ENCODE measurements at regions of chr2 and their contacts with region 1.

Region 1: DNA sequence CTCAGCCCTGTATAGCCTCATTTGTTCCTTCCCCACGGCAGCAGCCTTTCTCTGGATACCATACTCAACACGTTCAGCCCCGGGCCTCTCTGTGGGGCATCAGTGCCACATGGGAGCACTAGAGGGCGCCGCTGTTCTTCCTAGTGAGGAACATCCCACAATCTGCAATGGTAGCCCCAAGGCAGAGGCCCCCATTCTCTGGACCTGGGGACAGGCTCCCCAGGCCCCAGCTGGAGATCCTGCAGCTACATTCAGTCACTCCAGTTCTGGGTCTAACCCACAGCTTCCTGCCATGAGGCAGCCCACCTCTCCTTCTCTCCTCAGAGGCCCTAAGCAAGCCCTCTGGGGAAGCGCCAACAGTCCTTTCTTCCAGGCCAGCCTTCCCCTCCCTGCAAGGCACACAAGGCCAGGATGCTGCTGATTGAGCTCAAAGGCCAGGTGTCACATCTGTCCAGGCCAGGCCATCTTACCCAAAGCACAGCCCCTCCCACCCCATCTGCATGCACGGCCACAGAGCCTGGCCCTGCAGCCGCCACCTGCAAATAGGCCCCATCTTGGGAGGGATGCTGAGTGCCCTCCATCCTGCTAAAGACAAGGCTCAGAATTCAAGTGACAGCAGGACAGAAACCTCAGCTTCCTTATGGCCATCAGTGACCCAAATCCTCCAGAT is 14.3 kb upstream of the SFXN5 start:
- DNase-seq: peak; percentile 33
- H3K4me3 ChIP-seq: 0 out of 2 replicates have a peak overlapping the region, but pooled peaks have one; percentile 15
- H3K27ac ChIP-seq: no peak overlapping the region
- H3K27me3 ChIP-seq: no peaks in the 10 kb centered on the region
- CTCF ChIP-seq: peak; percentile 98

Region 2: GRCh38 chr2:72915907-72916742 is 169.7 kb before region 1 on chr2:
- CTCF ChIA-PET with region 1: no interaction called
- POLR2A ChIA-PET with region 1: no interaction called
- DNase-seq: no peak
- H3K4me3 ChIP-seq: no peak overlapping the region
- H3K27ac ChIP-seq: no peak overlapping the region
- H3K27me3 ChIP-seq: peaks cover 90% of the 10 kb centered on the region
- CTCF ChIP-seq: no peak

Region 3: GRCh38 chr2:73095910-73096309 is 10.1 kb after region 1 on chr2:
- CTCF ChIA-PET with region 1: interaction called, 18 read pairs
- POLR2A ChIA-PET with region 1: no interaction called
- DNase-seq: no peak
- H3K4me3 ChIP-seq: no peak overlapping the region
- H3K27ac ChIP-seq: no peak overlapping the region
- H3K27me3 ChIP-seq: no peaks in the 10 kb centered on the region
- CTCF ChIP-seq: no peak

Region 4: DNA sequence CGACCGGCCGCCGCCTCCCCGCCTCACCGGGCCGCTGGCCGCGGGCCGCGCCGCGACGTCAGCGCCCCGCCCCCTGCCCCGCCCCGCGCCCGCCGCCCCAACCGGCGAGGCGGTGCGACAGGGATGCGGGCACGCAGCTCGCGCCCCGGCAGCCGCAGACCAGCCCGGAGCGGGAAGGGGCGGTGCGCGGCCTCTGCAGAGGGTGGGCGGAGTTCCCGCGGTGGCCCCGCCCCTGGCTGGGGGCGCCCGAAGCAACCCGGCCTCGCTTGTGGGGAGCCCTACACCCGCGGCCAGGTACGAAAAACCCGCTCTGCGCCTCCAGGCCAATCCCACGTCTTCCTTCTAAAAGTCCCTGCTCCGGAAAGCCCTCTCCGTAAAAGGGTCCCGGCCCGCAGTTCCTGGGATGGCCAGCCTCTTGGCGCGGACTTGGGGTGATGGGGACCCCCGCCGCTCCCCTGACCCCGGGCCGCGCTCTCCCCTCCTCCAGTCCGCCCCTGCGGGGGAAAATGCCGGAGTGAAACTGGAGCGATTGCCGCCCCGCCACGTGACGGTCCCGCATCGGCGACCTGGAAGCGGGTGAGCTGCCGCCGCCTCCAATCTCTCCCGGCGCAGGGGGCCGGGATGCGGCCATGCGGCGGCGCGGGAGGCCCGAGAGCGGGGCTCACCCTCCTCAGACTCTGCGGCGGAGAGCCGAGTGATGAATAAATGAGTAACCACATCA is 27.2 kb after region 1 on chr2 and contains the start of gene RAB11FIP5:
- CTCF ChIA-PET with region 1: interaction called, 14 read pairs
- POLR2A ChIA-PET with region 1: interaction called, 11 read pairs
- DNase-seq: peak; percentile 55
- H3K4me3 ChIP-seq: peak within 1 kb of the TSS; percentile 84
- H3K27ac ChIP-seq: peak within 1 kb of the TSS; percentile 99
- H3K27me3 ChIP-seq: no peaks in the 10 kb centered on the region
- CTCF ChIP-seq: no peak
- polyA plus RNA-seq, gene RAB11FIP5: 29.6 and 37.5 TPM in 2 replicates

Region 5: DNA sequence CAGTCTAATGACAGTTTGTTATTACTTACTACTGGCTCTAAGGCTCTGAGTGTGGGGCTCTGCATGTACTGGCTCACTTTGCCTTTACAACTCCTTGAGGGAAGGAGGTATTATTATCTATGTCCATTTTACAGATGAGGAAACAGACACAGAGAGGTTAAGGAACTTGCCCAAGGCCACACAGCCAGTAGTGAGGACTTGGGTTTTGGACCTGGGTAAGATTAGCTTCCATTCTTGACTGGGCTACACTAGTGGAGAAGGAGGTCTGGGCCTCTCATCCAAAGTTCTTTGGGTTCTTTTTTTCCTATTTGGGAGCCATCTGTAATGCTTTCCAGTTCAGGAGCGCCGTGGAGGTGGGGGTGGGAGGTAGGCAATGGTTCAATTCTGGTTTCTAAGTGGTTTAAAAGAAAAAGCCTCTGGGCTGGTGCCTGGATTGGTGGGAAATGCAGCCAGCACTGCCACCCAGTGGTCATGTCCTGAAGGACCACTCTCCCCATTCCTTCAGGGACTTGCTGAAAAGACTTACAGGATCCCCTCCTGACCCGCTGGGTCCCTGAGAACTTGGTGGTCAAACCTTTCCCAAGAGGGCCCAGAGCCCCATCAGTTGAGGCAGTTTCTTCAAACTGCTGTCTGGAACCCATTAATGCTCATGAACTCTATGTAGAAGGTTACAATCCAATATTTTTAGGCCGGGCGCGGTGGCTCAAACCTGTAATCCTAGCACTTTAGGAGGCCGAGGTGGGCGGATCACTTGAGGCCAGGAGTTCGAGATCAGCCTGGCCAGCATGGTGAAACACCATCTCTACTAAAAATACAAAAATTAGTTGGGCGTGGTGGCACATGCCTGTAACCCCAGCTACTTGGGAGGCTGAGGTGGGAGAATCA is 77.9 kb after region 1 on chr2:
- CTCF ChIA-PET with region 1: interaction called, 240 read pairs
- POLR2A ChIA-PET with region 1: interaction called, 3 read pairs
- DNase-seq: peak; percentile 62
- H3K4me3 ChIP-seq: no peak overlapping the region
- H3K27ac ChIP-seq: no peak overlapping the region
- H3K27me3 ChIP-seq: peaks cover 5% of the 10 kb centered on the region
- CTCF ChIP-seq: peak; percentile 94

Region 6: DNA sequence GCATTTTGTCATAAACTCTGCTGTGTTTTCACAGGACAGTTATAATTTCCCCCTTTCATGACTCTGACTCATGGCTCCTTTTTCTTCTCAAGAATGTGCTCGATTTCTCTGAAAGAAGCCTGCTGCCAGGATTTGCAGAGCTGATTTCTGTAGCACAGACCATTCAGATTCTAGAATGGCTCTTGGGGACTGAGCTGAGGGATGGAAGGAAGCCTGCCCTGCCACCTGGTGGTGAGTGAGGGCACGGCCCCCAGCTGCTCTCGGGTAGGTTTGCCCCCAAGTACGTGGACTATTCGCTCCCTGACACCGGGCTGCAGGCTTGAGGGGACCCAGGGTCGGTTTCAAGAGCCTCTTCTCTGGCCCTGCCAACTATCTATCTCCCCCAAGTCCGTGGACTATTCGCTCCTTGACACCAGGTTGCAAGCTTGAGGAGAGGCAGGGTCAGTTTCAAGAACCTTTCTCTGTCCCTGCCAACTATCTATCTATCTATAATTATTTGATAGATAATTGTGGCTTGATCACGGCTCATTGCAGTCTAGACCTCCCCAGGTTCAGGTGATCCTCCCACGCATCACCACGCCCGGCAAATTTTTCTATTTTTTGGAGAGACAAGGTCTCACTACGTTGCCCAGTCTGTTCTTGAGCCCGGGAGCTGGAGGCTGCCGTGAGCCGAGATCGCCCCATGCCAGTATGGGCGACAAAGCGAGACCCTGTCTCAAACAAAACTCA is 126.8 kb after region 1 on chr2:
- CTCF ChIA-PET with region 1: interaction called, 24 read pairs
- POLR2A ChIA-PET with region 1: interaction called, 3 read pairs
- DNase-seq: peak; percentile 55
- H3K4me3 ChIP-seq: no peak overlapping the region
- H3K27ac ChIP-seq: no peak overlapping the region
- H3K27me3 ChIP-seq: peaks cover 4% of the 10 kb centered on the region
- CTCF ChIP-seq: peak; percentile 90

Region 7: DNA sequence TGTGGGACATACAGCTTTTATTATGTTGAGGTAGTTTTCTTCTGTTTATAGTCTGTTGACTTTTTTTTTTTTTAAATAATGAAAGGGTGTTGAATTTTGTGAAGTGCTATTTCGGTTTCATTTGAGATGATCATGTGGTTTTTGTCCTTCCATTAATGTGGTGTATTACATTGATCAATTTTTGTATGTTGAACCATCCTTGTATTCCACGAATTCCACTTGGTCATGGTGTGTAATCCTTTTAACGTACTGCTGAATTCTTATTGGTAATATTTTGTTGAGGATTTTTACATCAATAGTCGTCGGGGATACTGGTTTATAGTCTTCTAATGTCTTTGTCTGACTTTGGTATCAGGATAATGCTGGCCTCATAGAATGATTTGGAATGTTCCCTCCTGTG is 318.6 kb after region 1 on chr2:
- CTCF ChIA-PET with region 1: no interaction called
- POLR2A ChIA-PET with region 1: no interaction called
- DNase-seq: no peak
- H3K4me3 ChIP-seq: no peak overlapping the region
- H3K27ac ChIP-seq: no peak overlapping the region
- H3K27me3 ChIP-seq: no peaks in the 10 kb centered on the region
- CTCF ChIP-seq: no peak